ENCODE measurements at regions of chr5 and their contacts with region 1.

Region 1: GRCh38 chr5:150801117-150801927 is 22.8 kb downstream of the SMIM3 start:
- DNase-seq: peak; percentile 31
- H3K4me3 Mint-ChIP-seq: no peak overlapping the region
- H3K27ac Mint-ChIP-seq: no peak overlapping the region
- H3K4me1 Mint-ChIP-seq: peaks cover 31% of the 10 kb centered on the region
- H3K27me3 Mint-ChIP-seq: no peaks in the 10 kb centered on the region

Region 2: GRCh38 chr5:150560401-150561193 is 240.7 kb before region 1 on chr5:
- CTCF ChIA-PET with region 1: interaction called, 4 read pairs
- intact Hi-C with region 1: loop called (anchors 5 kb)
- DNase-seq: peak; percentile 96
- H3K4me3 Mint-ChIP-seq: no peak overlapping the region
- H3K27ac Mint-ChIP-seq: no peak overlapping the region
- H3K4me1 Mint-ChIP-seq: no peaks in the 10 kb centered on the region
- H3K27me3 Mint-ChIP-seq: no peaks in the 10 kb centered on the region

Region 3: GRCh38 chr5:150789943-150790611 is 11.2 kb before region 1 on chr5:
- CTCF ChIA-PET with region 1: interaction called, 9 read pairs
- intact Hi-C with region 1: loop called (anchors 1 kb)
- DNase-seq: peak; percentile 92
- H3K4me3 Mint-ChIP-seq: peak overlapping the region; percentile 64
- H3K27ac Mint-ChIP-seq: peak overlapping the region; percentile 97
- H3K4me1 Mint-ChIP-seq: peaks cover 65% of the 10 kb centered on the region
- H3K27me3 Mint-ChIP-seq: no peaks in the 10 kb centered on the region

Region 4: GRCh38 chr5:150989695-150990094 is 188.4 kb after region 1 on chr5:
- CTCF ChIA-PET with region 1: no interaction called
- intact Hi-C with region 1: loop called (anchors 1 kb)
- DNase-seq: peak; percentile 53
- H3K4me3 Mint-ChIP-seq: no peak overlapping the region
- H3K27ac Mint-ChIP-seq: no peak overlapping the region
- H3K4me1 Mint-ChIP-seq: no peaks in the 10 kb centered on the region
- H3K27me3 Mint-ChIP-seq: no peaks in the 10 kb centered on the region

Region 5: GRCh38 chr5:151089726-151090125 is 288.4 kb after region 1 on chr5:
- CTCF ChIA-PET with region 1: no interaction called
- intact Hi-C with region 1: no loop called
- DNase-seq: no peak
- H3K4me3 Mint-ChIP-seq: no peak overlapping the region
- H3K27ac Mint-ChIP-seq: no peak overlapping the region
- H3K4me1 Mint-ChIP-seq: peaks cover 53% of the 10 kb centered on the region
- H3K27me3 Mint-ChIP-seq: no peaks in the 10 kb centered on the region

Measured in activated naive CD4-positive, alpha-beta T cell treated with anti-CD3 and anti-CD28 coated beads for 36 hours (primary cell).